WTC11 (cell line): ENCODE measurements at regions of chr6 and their contacts with region 1.

Region 1: GRCh38 chr6:40328405-40328987 is 258.7 kb downstream of the LRFN2 start:
- DNase-seq: peak; percentile 84
- ATAC-seq: peak; percentile 80
- H3K4me3 Mint-ChIP-seq: peak overlapping the region; percentile 34
- H3K27ac Mint-ChIP-seq: peak overlapping the region; percentile 42
- H3K4me1 Mint-ChIP-seq: peaks cover 70% of the 10 kb centered on the region
- H3K27me3 Mint-ChIP-seq: peaks cover 20% of the 10 kb centered on the region
- CTCF ChIP-seq: peak; percentile 79

Region 2: GRCh38 chr6:39610221-39610620 is 718.3 kb before region 1 on chr6:
- CTCF ChIA-PET with region 1: no interaction called
- POLR2A ChIA-PET with region 1: no interaction called
- DNase-seq: no peak
- ATAC-seq: no peak
- H3K4me3 Mint-ChIP-seq: no peak overlapping the region
- H3K27ac Mint-ChIP-seq: no peak overlapping the region
- H3K4me1 Mint-ChIP-seq: peaks cover 12% of the 10 kb centered on the region
- H3K27me3 Mint-ChIP-seq: no peaks in the 10 kb centered on the region
- CTCF ChIP-seq: no peak

Region 3: GRCh38 chr6:40343877-40344565 is 15.5 kb after region 1 on chr6:
- CTCF ChIA-PET with region 1: interaction called, 40 read pairs
- POLR2A ChIA-PET with region 1: interaction called, 5 read pairs
- DNase-seq: no peak
- ATAC-seq: no peak
- H3K4me3 Mint-ChIP-seq: no peak overlapping the region
- H3K27ac Mint-ChIP-seq: no peak overlapping the region
- H3K4me1 Mint-ChIP-seq: peaks cover 54% of the 10 kb centered on the region
- H3K27me3 Mint-ChIP-seq: no peaks in the 10 kb centered on the region; the same call in 1 of the 2 replicates
- CTCF ChIP-seq: no peak

Region 4: GRCh38 chr6:40419372-40419771 is 90.9 kb after region 1 on chr6:
- CTCF ChIA-PET with region 1: interaction called, 16 read pairs
- POLR2A ChIA-PET with region 1: no interaction called
- DNase-seq: no peak
- ATAC-seq: peak; percentile 69
- H3K4me3 Mint-ChIP-seq: peak overlapping the region; percentile 12
- H3K27ac Mint-ChIP-seq: peak overlapping the region; percentile 87
- H3K4me1 Mint-ChIP-seq: peaks cover 45% of the 10 kb centered on the region
- H3K27me3 Mint-ChIP-seq: no peaks in the 10 kb centered on the region
- CTCF ChIP-seq: no peak

Region 5: GRCh38 chr6:40523505-40524172 is 195.1 kb after region 1 on chr6:
- CTCF ChIA-PET with region 1: interaction called, 14 read pairs
- POLR2A ChIA-PET with region 1: no interaction called
- DNase-seq: no peak
- ATAC-seq: peak; percentile 34; the same call in 1 of the 2 replicates
- H3K4me3 Mint-ChIP-seq: no peak overlapping the region; the same call in 1 of the 2 replicates
- H3K27ac Mint-ChIP-seq: no peak overlapping the region
- H3K4me1 Mint-ChIP-seq: peaks cover 57% of the 10 kb centered on the region
- H3K27me3 Mint-ChIP-seq: no peaks in the 10 kb centered on the region
- CTCF ChIP-seq: no peak

Region 6: GRCh38 chr6:40550202-40551101 is 222.0 kb after region 1 on chr6:
- CTCF ChIA-PET with region 1: interaction called, 23 read pairs
- POLR2A ChIA-PET with region 1: interaction called, 4 read pairs
- DNase-seq: no peak
- ATAC-seq: peak; percentile 33; the same call in 1 of the 2 replicates
- H3K4me3 Mint-ChIP-seq: no peak overlapping the region
- H3K27ac Mint-ChIP-seq: no peak overlapping the region
- H3K4me1 Mint-ChIP-seq: peaks cover 54% of the 10 kb centered on the region
- H3K27me3 Mint-ChIP-seq: no peaks in the 10 kb centered on the region
- CTCF ChIP-seq: peak; percentile 44